Colonic mucosa (tissue), 4 donors: ENCODE measurements at regions of chr2 and their contacts with region 1.

Region 1: GRCh38 chr2:30072250-30072842 is 74.5 kb upstream of the YPEL5 start:
- DNase-seq: peak; percentile 63
- H3K4me3 ChIP-seq: no peak overlapping the region
- H3K27ac ChIP-seq: no peak overlapping the region
- H3K4me1 ChIP-seq: no peaks in the 10 kb centered on the region
- H3K27me3 ChIP-seq: no peaks in the 10 kb centered on the region
- CTCF ChIP-seq: peak; percentile 55

Region 2: DNA sequence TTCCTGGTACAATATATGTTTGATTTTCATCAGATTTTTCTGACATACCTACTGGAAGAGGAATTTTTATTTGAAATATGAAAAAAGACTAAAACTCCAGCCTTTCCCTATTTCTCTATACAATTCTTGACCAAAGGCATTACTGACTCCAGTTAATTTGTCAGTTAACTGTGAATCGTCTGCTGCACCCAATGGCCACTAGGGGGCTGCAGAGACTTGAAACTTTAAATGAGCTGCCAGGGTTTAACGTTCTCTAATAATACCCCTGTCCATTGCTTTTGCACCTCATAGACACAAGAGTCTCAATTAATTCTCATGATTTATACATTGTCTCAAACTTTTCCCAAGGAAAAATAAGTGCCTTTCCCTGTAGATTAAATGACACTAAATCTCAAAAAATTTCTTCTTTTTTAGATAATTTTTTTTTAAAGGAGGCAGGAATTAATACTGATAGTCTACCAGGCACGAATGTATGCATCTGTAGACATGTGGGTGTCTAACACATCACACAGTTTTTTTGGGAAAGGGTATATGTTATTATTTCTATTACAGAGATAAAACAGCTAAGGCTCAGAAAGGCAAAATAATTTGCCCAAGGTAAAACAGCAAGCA is 149.1 kb before region 1 on chr2:
- intact Hi-C with region 1: loop called (anchors 5 kb)
- DNase-seq: peak; percentile 46
- H3K4me3 ChIP-seq: no peak overlapping the region
- H3K27ac ChIP-seq: no peak overlapping the region
- H3K4me1 ChIP-seq: peaks cover 8% of the 10 kb centered on the region
- H3K27me3 ChIP-seq: peaks cover 28% of the 10 kb centered on the region
- CTCF ChIP-seq: peak; percentile 96